Activated naive CD4-positive, alpha-beta T cell treated with anti-CD3 and anti-CD28 coated beads, Interleukin-2, amount 10 ng/mL, durations not matched to agents 7 days and 5 days (primary cell): ENCODE measurements at regions of chr17 and their contacts with region 1.

Region 1: DNA sequence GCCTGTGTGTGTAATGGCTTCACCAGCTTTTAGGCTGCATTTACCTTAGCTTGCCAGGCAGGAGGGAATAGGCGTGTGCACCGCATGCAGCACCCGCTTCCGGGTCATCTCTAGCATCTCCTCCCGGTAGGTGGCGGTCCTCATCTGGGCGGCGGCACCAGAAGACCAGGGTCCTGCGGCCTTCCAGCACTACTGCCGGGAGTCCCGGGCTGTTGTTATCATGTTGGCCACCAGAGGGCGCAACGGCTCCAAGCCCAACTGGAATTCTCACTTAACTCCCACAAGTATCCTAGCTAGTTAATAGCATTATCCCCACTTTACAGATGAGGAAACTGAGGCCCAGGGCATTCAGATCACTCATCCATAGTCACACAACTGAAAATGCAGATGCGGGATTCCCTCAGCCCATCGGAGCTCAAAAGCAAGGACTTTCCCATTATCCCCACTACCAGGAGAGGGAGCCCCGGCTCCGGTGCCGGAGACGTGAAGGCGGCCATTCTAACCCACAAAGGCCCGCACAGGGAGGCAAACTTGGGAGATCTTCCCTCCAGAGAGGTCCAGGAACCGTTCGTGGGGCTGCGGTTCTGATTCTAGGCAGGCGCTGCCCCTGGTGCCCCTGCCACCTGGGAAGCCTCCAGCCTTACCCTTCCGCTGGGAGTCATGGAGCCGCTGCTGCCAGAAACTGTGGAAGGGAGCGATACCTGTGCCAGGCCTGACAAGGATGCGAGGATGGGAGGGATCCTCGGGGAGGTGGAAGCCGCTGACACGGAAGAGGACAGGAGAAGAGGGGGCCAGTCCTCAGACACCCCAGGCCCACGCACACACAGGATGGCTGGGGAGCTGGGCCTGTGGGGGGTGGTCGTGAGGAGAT is 23.9 kb downstream of the LGALS9 start:
- DNase-seq: peak; percentile 78
- H3K4me3 Mint-ChIP-seq: no peak overlapping the region
- H3K27ac Mint-ChIP-seq: no peak overlapping the region
- H3K4me1 Mint-ChIP-seq: peaks cover 9% of the 10 kb centered on the region
- H3K27me3 Mint-ChIP-seq: peaks cover 13% of the 10 kb centered on the region

Region 2: GRCh38 chr17:27236717-27237315 is 418.1 kb before region 1 on chr17:
- CTCF ChIA-PET with region 1: interaction called, 36 read pairs
- DNase-seq: peak; percentile 84
- H3K4me3 Mint-ChIP-seq: no peak overlapping the region
- H3K27ac Mint-ChIP-seq: no peak overlapping the region
- H3K4me1 Mint-ChIP-seq: peaks cover 11% of the 10 kb centered on the region
- H3K27me3 Mint-ChIP-seq: peaks cover 42% of the 10 kb centered on the region

Region 3: GRCh38 chr17:27552469-27552779 is 102.5 kb before region 1 on chr17:
- CTCF ChIA-PET with region 1: no interaction called
- DNase-seq: no peak
- H3K4me3 Mint-ChIP-seq: no peak overlapping the region
- H3K27ac Mint-ChIP-seq: no peak overlapping the region
- H3K4me1 Mint-ChIP-seq: peaks cover 21% of the 10 kb centered on the region
- H3K27me3 Mint-ChIP-seq: no peaks in the 10 kb centered on the region

Region 4: GRCh38 chr17:27609611-27610303 is 45.1 kb before region 1 on chr17:
- CTCF ChIA-PET with region 1: interaction called, 153 read pairs
- DNase-seq: peak; percentile 65
- H3K4me3 Mint-ChIP-seq: no peak overlapping the region
- H3K27ac Mint-ChIP-seq: no peak overlapping the region
- H3K4me1 Mint-ChIP-seq: peaks cover 14% of the 10 kb centered on the region
- H3K27me3 Mint-ChIP-seq: no peaks in the 10 kb centered on the region

Region 5: GRCh38 chr17:27630607-27631410 is 24.1 kb before region 1 on chr17 and contains the start of gene LGALS9:
- CTCF ChIA-PET with region 1: interaction called, 18 read pairs
- DNase-seq: peak; percentile 67
- H3K4me3 Mint-ChIP-seq: peak within 1 kb of the TSS; percentile 89
- H3K27ac Mint-ChIP-seq: peak within 1 kb of the TSS; percentile 88
- H3K4me1 Mint-ChIP-seq: peaks cover 66% of the 10 kb centered on the region
- H3K27me3 Mint-ChIP-seq: no peaks in the 10 kb centered on the region

Region 6: GRCh38 chr17:27760069-27760885 is 105.4 kb after region 1 on chr17:
- CTCF ChIA-PET with region 1: interaction called, 81 read pairs
- DNase-seq: peak; percentile 79
- H3K4me3 Mint-ChIP-seq: no peak overlapping the region
- H3K27ac Mint-ChIP-seq: no peak overlapping the region
- H3K4me1 Mint-ChIP-seq: no peaks in the 10 kb centered on the region
- H3K27me3 Mint-ChIP-seq: peaks cover 6% of the 10 kb centered on the region

Region 7: GRCh38 chr17:27879987-27880608 is 225.2 kb after region 1 on chr17:
- CTCF ChIA-PET with region 1: interaction called, 24 read pairs
- DNase-seq: peak; percentile 83
- H3K4me3 Mint-ChIP-seq: no peak overlapping the region
- H3K27ac Mint-ChIP-seq: no peak overlapping the region
- H3K4me1 Mint-ChIP-seq: peaks cover 26% of the 10 kb centered on the region
- H3K27me3 Mint-ChIP-seq: peaks cover 5% of the 10 kb centered on the region